ENCODE measurements at regions of chr21 and their contacts with region 1.

Region 1: GRCh38 chr21:36859744-36860501 is 106.5 kb downstream of the HLCS start:
- DNase-seq: peak; percentile 93
- ATAC-seq: peak; percentile 74
- H3K4me3 ChIP-seq: peak overlapping the region; percentile 43; the same call in 1 of the 2 replicates
- H3K27ac ChIP-seq: peak overlapping the region; percentile 94
- H3K4me1 ChIP-seq: peaks cover 64% of the 10 kb centered on the region
- H3K27me3 ChIP-seq: no peaks in the 10 kb centered on the region
- CTCF ChIP-seq: no peak

Region 2: DNA sequence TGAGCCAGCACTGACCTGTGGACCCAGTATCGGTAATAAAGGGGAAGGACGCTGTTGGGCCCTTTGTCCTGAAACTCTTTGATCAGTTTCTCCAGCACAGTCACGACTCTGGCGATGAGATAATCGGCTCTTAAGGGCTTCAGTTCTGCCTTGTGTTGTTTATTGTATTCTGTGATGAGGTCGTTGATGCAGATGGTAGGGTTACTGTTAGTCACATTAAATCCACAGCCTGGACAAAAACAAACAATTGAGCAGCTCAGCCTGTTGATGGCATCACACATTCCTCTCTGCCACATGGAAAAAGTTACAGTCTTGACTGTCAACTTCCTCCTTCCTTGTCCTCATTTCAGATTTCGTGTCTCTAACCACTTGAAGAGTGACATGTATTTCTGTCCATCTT is 103.4 kb before region 1 on chr21:
- CTCF ChIA-PET with region 1: no interaction called
- POLR2A ChIA-PET with region 1: no interaction called
- intact Hi-C with region 1: loop called (anchors 2 kb)
- DNase-seq: peak; percentile 76
- ATAC-seq: peak; percentile 73
- H3K4me3 ChIP-seq: no peak overlapping the region
- H3K27ac ChIP-seq: peak overlapping the region; percentile 56
- H3K4me1 ChIP-seq: peaks cover 21% of the 10 kb centered on the region
- H3K27me3 ChIP-seq: no peaks in the 10 kb centered on the region
- CTCF ChIP-seq: no peak

Region 3: DNA sequence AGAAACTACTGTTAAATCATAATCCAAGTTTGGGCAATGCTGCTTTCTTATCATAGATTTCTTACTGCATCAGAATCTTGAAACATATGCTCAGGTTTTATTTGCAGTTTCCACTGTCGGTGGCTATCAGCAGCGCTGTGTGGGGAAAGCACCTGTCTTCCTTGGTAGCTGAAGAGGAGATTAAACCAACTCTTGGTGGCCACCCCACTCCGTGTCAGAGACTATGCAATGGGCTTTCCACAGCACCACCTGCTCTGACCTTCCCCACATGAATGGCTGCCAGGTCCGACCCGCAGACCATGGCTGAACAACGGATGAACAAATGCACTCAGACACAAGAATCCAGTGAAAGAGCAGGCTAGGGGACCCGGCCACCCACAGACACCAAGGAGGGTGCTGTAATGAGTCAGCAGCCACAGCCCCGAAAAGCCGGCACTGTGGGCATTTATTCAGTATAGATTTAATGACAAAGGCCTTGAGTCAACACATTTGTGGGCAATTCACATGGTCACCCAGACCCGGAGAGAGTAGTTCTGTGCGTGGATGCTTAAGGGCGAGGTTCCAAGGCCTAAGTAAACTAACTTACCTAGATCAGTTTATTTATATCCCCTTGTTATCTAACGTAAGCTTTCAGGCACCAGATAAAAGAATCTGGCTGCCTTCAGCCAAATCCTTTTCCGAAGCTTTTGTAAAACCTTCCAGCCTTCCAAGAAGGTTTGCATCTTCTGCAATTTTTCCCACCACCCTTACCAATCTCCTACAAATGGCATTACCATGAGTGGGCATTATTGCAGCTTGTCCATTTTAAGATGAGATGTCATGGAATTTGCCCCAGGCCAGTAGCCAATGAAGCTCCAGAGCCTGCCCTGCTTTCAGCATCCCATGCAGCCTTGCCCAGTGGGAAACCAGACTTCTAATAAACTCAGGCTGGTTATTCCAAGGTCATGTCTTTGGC is 23.9 kb after region 1 on chr21:
- CTCF ChIA-PET with region 1: no interaction called
- POLR2A ChIA-PET with region 1: no interaction called
- intact Hi-C with region 1: loop called (anchors 1 kb)
- DNase-seq: peak; percentile 91
- ATAC-seq: peak; percentile 95
- H3K4me3 ChIP-seq: no peak overlapping the region
- H3K27ac ChIP-seq: peak overlapping the region; percentile 95
- H3K4me1 ChIP-seq: peaks cover 22% of the 10 kb centered on the region
- H3K27me3 ChIP-seq: no peaks in the 10 kb centered on the region
- CTCF ChIP-seq: no peak

Region 4: GRCh38 chr21:36909901-36910561 is 50.1 kb after region 1 on chr21:
- CTCF ChIA-PET with region 1: interaction called, 3 read pairs
- POLR2A ChIA-PET with region 1: no interaction called
- intact Hi-C with region 1: loop called (anchors 1 kb)
- DNase-seq: peak; percentile 99
- ATAC-seq: peak; percentile 82
- H3K4me3 ChIP-seq: no peak overlapping the region
- H3K27ac ChIP-seq: peak overlapping the region; percentile 98
- H3K4me1 ChIP-seq: peaks cover 43% of the 10 kb centered on the region
- H3K27me3 ChIP-seq: no peaks in the 10 kb centered on the region
- CTCF ChIP-seq: no peak

Region 5: DNA sequence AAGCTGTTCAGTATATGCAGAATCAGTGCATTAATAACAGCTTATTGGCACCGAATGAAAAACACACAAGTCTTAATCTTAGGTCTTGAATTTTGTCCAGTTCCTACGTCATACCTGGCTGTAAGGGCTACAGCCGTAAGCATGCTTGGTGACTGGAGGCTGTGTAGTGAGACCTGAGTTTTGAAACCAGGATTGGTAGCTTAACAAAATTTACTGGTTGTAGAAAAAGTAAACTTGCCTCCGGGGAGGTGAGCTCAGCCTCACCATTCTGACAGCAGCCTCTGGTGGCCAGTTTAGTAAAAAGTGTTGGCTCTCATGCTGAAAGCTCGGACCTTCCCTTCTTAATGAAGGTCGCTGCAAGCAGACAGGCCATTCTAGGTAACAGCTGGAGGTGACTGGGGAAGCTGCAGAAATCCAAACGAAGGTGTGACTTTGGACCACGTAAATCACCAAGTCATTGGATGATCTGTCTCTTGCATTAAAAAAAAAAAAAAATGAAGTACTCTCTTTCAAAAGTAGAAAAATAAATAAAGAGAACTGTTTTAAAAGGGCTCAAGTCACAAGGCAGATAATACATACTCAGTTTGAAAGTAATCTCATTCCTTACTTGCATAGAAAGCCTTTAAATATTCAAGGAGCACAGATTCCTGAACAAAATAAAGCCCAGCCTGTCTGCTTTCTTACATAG is 57.7 kb after region 1 on chr21:
- CTCF ChIA-PET with region 1: interaction called, 5 read pairs
- POLR2A ChIA-PET with region 1: interaction called, 10 read pairs
- intact Hi-C with region 1: loop called (anchors 2 kb)
- DNase-seq: peak; percentile 87
- ATAC-seq: peak; percentile 85
- H3K4me3 ChIP-seq: no peak overlapping the region
- H3K27ac ChIP-seq: peak overlapping the region; percentile 88
- H3K4me1 ChIP-seq: peaks cover 30% of the 10 kb centered on the region
- H3K27me3 ChIP-seq: no peaks in the 10 kb centered on the region
- CTCF ChIP-seq: peak; percentile 90

Measured in PC-3 (cell line).